ENCODE measurements at regions of chr1 and their contacts with region 1.

Region 1: DNA sequence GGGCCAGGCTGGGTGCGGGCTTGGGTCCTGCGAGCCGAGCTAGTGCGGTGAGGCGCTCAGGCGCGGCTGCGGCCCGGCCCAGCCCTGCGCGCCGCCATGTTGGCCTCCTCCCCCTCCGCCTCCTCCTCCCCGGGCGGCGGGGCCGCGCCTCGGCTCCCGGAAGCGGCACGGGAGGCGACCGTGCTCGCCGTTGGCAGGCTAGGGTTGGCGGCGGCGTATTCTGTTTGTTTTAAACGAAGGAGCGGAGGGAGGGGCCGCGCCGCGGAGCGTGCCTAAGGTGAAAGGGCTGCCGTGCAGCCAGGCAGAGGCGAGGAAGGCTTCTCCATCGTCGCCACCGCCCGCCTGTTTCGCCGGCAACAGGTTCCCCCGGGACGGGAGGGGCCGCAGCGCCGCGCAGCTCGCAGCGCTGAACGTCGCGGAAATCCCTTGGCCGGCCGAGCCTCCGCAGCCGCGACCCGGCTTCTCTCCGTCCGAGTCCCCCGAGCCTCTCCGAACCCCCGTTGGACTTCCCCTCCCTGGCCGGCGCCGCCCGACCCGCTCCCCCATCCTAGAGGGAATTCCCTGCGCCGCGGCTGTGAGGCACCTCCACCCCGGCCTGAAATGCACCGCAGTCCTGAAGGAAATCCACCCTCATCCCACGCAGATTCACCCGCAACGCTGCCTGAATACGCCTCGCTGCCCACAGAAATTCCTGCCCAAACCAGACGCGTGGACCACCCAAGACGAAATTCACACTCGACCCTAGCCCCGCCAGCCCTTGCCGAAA is at the start of gene USP24:
- DNase-seq: no peak
- ATAC-seq: peak; percentile 90
- H3K4me3 ChIP-seq: peak within 1 kb of the TSS; percentile 69 to 86
- H3K27ac ChIP-seq: peak within 1 kb of the TSS; percentile 97
- H3K4me1 ChIP-seq: peaks cover 37% of the 10 kb centered on the region
- H3K27me3 ChIP-seq: no peaks in the 10 kb centered on the region
- CTCF ChIP-seq: no peak
- total RNA-seq, gene USP24: 52.2 TPM

Region 2: DNA sequence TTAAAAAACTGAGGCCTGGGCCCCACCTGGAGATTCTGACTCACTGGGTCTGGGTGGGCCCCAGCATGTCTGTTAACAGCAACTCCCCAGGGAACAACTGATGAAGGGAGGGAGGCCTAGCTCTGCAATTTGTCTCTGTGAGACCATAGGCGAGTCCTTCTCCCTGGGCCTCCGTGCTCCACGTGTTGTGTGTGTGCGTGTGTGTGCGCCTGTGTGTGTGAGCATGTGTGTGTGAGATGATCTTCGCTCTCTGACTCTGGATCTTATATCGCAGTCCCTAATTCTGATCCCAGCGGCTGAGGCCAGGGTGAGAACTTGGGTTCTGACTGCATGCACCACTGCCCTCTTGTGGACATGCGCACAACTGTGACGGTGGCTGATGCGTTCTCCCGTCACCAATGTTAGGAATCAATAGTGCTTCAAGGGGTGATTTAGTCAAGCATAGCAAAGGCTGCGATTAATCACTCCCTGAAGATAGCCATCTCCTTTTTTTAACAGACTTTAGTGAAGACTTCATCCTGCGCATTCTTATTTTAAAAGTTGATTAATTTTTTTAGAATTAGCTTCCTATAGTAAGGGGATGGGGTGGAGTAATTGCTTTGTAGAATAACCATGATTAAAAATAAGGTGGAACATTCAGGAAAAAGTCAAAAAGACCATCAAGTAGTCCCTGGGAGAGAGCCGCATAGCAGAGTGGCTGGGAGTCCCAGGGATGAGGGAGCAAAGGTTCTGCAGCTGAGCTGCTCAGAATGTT is 62.1 kb after region 1 on chr1:
- CTCF ChIA-PET with region 1: interaction called, 6 read pairs
- POLR2A ChIA-PET with region 1: no interaction called
- in situ Hi-C with region 1: no loop called
- intact Hi-C with region 1: loop called (anchors 5 kb)
- DNase-seq: peak; percentile 61
- ATAC-seq: peak; percentile 98
- H3K4me3 ChIP-seq: no peak overlapping the region
- H3K27ac ChIP-seq: no peak overlapping the region
- H3K4me1 ChIP-seq: peaks cover 6% of the 10 kb centered on the region; the same call in 1 of the 2 replicates
- H3K27me3 ChIP-seq: no peaks in the 10 kb centered on the region
- CTCF ChIP-seq: peak; percentile 91